A673 (cell line): ENCODE measurements at regions of chr2 and their contacts with region 1.

Region 1: GRCh38 chr2:146312899-146313298 is 1531.9 kb upstream of the ACVR2A start:
- DNase-seq: peak; percentile 97
- H3K4me3 ChIP-seq: no peak overlapping the region
- H3K27ac ChIP-seq: peak overlapping the region; percentile 66
- H3K4me1 ChIP-seq: peaks cover 52% of the 10 kb centered on the region
- H3K27me3 ChIP-seq: no peaks in the 10 kb centered on the region
- CTCF ChIP-seq: peak; percentile 59

Region 2: DNA sequence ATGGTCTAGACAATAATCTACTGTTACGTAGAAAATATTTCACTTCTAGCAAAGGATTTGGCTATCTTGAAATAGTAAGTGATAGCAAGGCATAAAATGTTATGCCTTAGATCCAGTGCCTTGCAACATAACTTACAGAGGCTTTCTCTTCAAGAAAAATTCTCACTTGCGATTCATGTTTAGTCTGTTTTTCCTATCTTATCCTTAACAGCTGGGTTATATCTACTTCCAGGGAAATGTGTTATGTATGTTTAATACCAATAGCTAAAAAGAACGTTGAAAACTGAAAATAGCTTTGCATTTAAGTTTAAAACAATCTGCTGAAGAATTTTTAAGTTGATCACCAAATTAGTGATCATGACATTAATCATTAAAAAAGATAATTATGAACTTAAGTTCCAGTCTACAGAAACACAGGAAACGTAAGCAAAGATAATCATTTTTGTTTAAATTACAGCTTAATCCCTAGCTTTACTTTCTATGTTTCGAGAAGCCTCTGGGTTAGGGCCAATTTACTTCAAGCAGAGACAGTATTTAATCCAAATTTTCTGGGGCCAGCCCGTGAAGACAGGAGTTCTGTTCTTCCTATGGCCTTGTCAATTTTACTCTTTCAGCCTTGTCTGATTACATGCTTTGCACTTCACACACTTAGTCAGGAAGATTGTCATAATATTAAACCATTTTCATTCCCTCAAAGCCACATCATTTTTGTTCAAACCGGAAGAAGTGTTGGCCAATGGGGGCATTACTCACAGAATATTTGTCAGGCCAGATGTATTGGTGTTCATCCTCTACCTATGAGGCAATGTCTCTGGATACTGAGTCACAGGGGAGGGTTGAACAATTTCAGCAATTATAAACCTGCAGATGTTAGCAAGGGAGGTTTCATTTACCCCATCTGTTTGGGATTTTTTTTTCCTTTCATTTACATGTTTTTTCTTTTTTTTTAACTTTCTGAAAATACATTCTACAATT is 660.0 kb before region 1 on chr2:
- CTCF ChIA-PET with region 1: no interaction called
- POLR2A ChIA-PET with region 1: no interaction called
- intact Hi-C with region 1: loop called (anchors 10 kb)
- DNase-seq: peak; percentile 90
- H3K4me3 ChIP-seq: no peak overlapping the region
- H3K27ac ChIP-seq: peak overlapping the region; percentile 83
- H3K4me1 ChIP-seq: peaks cover 59% of the 10 kb centered on the region
- H3K27me3 ChIP-seq: no peaks in the 10 kb centered on the region
- CTCF ChIP-seq: no peak

Region 3: GRCh38 chr2:145752091-145752806 is 560.6 kb before region 1 on chr2:
- CTCF ChIA-PET with region 1: interaction called, 5 read pairs
- POLR2A ChIA-PET with region 1: no interaction called
- intact Hi-C with region 1: loop called (anchors 2 kb)
- DNase-seq: peak; percentile 94
- H3K4me3 ChIP-seq: no peak overlapping the region
- H3K27ac ChIP-seq: peak overlapping the region; percentile 87
- H3K4me1 ChIP-seq: peaks cover 47% of the 10 kb centered on the region
- H3K27me3 ChIP-seq: no peaks in the 10 kb centered on the region
- CTCF ChIP-seq: peak; percentile 82

Region 4: DNA sequence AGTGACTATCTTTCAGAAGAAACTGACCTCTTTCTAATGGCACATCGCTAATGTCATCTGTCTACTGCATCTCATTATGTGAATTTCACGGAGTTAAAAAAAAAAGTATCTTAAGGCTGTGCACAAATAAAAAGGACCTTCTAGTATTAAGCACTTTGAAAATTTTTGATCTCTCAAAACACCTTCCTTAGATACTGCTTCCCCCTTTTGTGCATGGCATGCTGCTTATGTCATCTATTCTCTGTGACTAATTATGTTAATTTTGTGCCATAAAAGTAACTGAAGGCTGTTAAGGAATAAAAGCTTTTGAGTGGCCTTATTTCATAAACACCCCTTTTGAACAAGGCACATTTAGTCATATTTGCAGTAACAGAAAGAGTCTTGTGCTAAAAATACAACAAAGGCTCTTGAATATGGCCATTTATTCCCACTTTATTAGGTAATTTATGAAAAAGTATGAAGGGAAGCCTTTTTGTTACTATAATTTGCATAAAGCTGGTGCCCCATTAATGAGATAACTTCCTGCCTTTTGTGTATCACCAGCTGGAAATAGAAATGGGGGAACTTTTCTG is 381.0 kb before region 1 on chr2:
- CTCF ChIA-PET with region 1: no interaction called
- POLR2A ChIA-PET with region 1: no interaction called
- intact Hi-C with region 1: loop called (anchors 5 kb)
- DNase-seq: peak; percentile 90
- H3K4me3 ChIP-seq: peak overlapping the region; percentile 16
- H3K27ac ChIP-seq: no peak overlapping the region
- H3K4me1 ChIP-seq: peaks cover 27% of the 10 kb centered on the region
- H3K27me3 ChIP-seq: no peaks in the 10 kb centered on the region
- CTCF ChIP-seq: no peak

Region 5: GRCh38 chr2:146392186-146392585 is 79.3 kb after region 1 on chr2:
- CTCF ChIA-PET with region 1: no interaction called
- POLR2A ChIA-PET with region 1: no interaction called
- intact Hi-C with region 1: no loop called
- DNase-seq: no peak
- H3K4me3 ChIP-seq: no peak overlapping the region
- H3K27ac ChIP-seq: no peak overlapping the region
- H3K4me1 ChIP-seq: no peaks in the 10 kb centered on the region
- H3K27me3 ChIP-seq: no peaks in the 10 kb centered on the region
- CTCF ChIP-seq: no peak

Region 6: DNA sequence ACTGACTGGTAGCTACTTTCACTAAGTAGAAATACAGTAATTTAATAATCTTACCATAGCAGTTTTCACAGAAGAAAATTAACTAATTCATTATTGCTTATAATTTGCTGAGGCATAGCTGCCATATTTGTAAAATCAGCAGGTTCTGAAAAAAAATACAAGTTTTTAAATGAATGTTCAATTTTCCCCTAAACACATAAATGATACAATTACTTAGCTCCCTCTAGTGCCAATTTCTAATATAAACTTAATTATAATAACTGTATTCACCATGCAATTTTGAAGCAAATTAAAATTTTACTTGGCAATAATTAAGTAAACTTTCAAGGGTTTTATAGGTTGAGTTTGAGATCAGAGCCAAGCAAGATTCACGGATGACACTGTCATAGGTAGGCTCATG is 210.3 kb after region 1 on chr2:
- CTCF ChIA-PET with region 1: no interaction called
- POLR2A ChIA-PET with region 1: no interaction called
- intact Hi-C with region 1: loop called (anchors 2 kb)
- DNase-seq: peak; percentile 67
- H3K4me3 ChIP-seq: no peak overlapping the region
- H3K27ac ChIP-seq: no peak overlapping the region
- H3K4me1 ChIP-seq: peaks cover 10% of the 10 kb centered on the region
- H3K27me3 ChIP-seq: no peaks in the 10 kb centered on the region
- CTCF ChIP-seq: peak; percentile 58

Region 7: DNA sequence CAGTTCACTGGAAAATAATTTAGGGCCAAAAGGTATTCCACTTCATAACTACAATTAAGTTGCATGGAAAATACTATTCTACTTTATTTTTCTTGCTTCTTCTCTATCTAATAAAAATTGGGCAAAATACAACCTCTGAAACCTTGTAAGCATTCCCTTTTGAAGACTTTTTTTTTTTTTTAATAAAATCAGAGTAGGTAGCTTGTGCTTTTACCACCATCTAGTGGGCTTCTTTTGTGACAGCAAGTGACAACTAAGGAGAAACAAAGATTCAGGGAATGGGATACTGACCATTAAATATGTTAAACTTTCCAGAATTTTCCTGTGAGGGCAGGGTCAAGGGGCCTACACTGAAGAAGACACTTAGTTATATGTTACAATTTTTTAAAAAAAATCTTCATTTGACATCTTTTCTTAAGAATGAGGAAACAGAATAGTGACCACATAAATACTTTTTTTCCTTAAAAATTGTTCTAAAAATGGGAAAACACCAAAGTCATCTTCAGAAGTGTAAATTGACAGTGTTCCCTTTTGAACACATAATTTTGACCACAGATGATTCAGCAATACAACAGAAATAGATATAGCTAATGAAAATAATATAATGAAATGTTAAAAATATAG is 348.7 kb after region 1 on chr2:
- CTCF ChIA-PET with region 1: no interaction called
- POLR2A ChIA-PET with region 1: no interaction called
- intact Hi-C with region 1: loop called (anchors 5 kb)
- DNase-seq: peak; percentile 72
- H3K4me3 ChIP-seq: no peak overlapping the region
- H3K27ac ChIP-seq: no peak overlapping the region
- H3K4me1 ChIP-seq: peaks cover 5% of the 10 kb centered on the region
- H3K27me3 ChIP-seq: no peaks in the 10 kb centered on the region
- CTCF ChIP-seq: peak; percentile 80

Region 8: DNA sequence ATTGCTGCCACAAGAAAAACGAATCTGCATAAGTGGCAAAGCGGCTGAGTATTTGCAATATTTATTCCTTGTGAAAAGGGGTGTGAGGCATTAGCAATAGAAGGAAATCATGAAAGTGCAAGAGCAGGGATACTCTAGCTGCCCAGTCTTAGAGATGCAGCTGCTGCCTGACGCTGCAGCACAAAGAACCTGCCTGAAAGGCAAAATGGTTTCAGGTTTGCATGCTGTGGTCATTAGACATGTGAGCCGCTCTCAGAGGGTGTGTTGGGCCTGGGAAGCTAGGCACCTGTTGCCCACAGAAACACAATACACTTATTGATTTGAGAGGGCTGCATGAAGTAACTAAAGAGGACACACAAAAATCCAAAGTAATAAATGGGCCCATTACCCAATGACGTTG is 1039.4 kb after region 1 on chr2:
- CTCF ChIA-PET with region 1: no interaction called
- POLR2A ChIA-PET with region 1: no interaction called
- intact Hi-C with region 1: no loop called
- DNase-seq: no peak
- H3K4me3 ChIP-seq: no peak overlapping the region
- H3K27ac ChIP-seq: no peak overlapping the region
- H3K4me1 ChIP-seq: no peaks in the 10 kb centered on the region
- H3K27me3 ChIP-seq: no peaks in the 10 kb centered on the region
- CTCF ChIP-seq: no peak